ENCODE measurements at regions of chr11 and their contacts with region 1.

Region 1: DNA sequence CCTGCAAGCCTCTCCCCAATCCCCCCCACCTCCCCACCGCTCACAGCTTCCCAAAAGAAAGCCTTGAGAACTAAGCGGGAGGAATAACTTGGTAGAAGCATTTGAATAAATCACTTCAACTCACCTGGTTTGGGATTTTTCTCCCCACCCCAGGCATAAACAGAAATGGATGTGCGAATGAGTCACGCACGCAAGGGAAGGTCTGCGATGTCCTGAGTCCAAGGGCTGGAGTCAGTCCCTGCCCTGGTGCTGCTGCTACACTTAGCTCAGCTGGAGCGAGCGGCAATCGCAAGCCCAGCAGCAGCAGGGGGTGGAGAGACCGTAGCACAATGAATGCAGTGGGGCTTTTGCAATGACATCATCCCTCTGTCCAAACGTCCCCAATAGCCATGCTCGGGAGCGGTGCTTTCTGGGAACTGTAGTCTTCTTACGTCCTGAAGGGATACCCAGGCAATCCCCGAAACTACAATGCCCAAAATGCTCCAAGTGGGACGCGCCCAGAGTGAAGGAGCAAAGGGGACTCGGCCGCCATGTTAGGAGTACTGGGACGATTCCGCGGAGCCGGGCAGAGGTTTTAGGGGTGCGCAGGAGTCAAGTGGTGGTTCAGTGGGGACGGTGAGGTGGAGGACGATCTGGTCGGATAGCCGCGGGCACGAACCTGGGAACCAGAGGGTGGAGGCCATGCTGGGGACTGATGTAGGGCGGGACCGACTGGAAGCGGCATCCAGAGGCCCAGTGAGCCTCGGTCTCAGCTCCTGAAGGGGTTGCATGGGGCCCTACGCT is at the start of gene RAB30:
- DNase-seq: peak; percentile 95
- ATAC-seq: peak; percentile 99
- total RNA-seq, gene RAB30: 28.2 TPM

Region 2: DNA sequence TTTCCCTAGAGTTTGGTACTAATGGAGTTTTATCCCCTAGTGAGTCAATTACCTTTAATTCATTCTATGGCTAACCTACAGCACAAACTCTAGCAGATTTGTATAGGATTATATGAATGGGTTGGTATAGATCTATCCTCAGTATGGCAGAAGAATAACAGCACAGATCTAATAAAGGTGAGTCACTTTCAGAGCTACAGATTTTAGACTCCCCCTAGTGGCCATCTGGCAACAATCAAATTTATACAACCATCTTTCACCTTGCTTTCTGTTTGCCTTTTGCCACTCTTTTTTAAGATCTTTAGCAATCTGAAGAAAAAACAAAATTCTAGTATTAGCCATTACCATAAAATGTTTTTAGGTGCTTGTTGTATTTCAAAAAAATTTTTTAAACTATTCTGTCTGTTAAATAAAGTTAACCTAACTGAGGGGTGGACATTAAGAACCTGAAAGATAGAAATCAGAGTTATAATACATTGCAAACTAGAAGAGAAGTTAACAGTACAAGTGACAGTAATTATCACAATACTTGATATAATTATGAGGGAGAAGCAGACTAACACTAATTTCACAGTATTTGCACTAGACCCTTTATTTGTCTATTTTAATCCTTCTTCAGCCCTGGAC is 144.4 kb before region 1 on chr11:
- intact Hi-C with region 1: loop called (anchors 5 kb)
- DNase-seq: no peak
- ATAC-seq: no peak

Region 3: GRCh38 chr11:83007909-83008580 is 63.7 kb before region 1 on chr11:
- intact Hi-C with region 1: loop called (anchors 5 kb)
- DNase-seq: no peak
- ATAC-seq: peak; percentile 81

Region 4: DNA sequence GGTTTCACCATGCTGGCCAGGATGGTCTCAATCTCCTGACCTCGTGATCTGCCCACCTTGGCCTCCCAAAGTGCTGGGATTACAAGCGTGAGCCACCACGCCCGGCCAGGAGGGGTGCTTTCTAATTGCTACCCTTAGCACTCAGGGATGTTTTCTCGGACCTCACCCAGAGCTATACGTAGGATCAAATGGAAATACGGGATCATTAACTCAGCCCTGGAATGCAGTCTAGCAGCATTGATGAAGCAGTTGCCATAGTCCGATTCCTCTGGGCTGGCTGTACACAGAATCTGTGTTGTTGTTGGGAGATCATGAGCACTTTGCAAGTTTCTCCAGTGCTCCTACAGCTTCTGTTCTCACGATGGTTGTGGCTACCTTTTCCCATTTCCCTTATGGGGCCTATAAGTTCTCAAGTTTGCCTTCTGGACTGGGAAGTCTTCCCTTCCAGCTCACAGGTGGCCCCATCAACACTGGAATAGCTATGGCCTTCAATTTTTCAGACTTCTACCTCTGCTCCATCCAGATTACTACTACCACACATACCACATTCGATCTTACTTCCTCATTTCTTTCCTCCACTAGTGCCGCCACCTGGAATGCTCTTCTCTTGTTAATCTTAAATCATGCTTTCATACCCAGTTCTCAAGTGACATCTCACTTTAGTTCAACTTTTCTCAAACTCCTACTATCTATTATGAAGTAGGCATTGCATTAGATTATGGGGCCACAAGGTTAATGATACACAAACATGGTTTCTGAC is 69.1 kb after region 1 on chr11:
- intact Hi-C with region 1: no loop called
- DNase-seq: no peak
- ATAC-seq: no peak

Region 5: GRCh38 chr11:83156150-83156995 is 84.6 kb after region 1 on chr11:
- intact Hi-C with region 1: loop called (anchors 1 kb)
- DNase-seq: peak; percentile 99
- ATAC-seq: peak; percentile 97

Region 6: GRCh38 chr11:83285771-83286528 is 214.2 kb after region 1 on chr11 and contains the start of gene CCDC90B:
- intact Hi-C with region 1: loop called (anchors 1 kb)
- DNase-seq: peak; percentile 96
- ATAC-seq: peak; percentile 98
- total RNA-seq, gene CCDC90B: 21.2 TPM